ENCODE measurements at regions of chr11 and their contacts with region 1.

Region 1: DNA sequence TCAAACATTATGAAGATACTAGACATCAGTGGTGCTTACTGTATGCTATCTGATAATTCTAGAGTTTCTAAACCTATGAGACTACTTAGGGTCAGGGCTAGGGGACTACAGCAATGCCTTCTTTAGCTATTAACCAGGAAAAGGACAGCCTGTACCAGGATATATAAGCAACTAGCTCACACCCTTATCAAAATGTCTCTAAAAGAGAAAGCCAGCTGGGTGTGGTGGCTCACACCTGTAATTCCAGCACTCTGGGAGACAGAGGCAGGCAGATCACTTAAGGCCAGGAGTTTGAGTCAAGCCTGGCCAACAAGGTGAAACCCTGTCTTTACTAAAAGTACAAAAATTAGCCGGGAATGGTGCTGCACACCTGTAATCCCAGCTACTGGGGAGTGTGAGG is 55.8 kb downstream of the RAB6A start:
- DNase-seq: no peak
- ATAC-seq: no peak
- H3K4me3 ChIP-seq: no peak overlapping the region
- H3K27ac ChIP-seq: no peak overlapping the region
- H3K4me1 ChIP-seq: no peaks in the 10 kb centered on the region
- H3K27me3 ChIP-seq: no peaks in the 10 kb centered on the region
- CTCF ChIP-seq: no peak
- EP300 ChIP-seq: no peak
- POLR2A ChIP-seq: no peak
- RAD21 ChIP-seq: no peak

Region 2: GRCh38 chr11:73633999-73634398 is 71.1 kb before region 1 on chr11:
- CTCF ChIA-PET with region 1: no interaction called
- POLR2A ChIA-PET with region 1: no interaction called
- in situ Hi-C with region 1: no loop called
- intact Hi-C with region 1: no loop called
- DNase-seq: no peak
- ATAC-seq: no peak
- H3K4me3 ChIP-seq: no peak overlapping the region
- H3K27ac ChIP-seq: no peak overlapping the region
- H3K4me1 ChIP-seq: peaks cover 12% of the 10 kb centered on the region
- H3K27me3 ChIP-seq: no peaks in the 10 kb centered on the region
- CTCF ChIP-seq: no peak
- EP300 ChIP-seq: no peak
- POLR2A ChIP-seq: no peak
- RAD21 ChIP-seq: no peak

Region 3: DNA sequence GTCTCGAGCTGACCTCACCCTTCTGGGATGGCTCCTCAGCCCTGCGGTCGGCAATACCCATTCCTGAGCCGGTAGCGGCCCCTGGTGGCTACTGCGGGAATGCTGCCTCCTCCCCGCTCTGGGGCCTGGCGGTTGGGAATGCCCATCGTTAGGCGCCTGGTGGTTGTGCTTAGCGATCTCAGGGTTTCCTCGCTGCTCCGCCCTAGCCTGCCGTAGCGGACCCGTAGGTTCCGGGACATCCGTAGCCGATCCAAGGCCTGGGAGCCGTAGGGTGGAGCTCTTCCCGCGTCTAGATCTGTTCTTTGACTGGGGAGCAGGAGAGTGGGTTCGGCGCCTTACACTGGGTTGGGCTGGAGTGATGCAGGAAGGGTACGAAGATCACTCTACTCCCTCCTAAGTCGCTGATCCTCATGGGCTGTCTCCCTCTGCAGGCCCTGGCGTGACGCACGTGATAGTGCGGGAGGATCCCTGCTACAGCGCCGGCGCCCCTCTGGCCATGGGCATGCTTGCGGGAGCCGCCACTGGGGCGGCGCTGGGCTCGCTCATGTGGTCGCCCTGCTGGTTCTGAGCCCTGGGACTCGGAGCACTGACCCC is 43.9 kb before region 1 on chr11:
- CTCF ChIA-PET with region 1: no interaction called
- POLR2A ChIA-PET with region 1: no interaction called
- in situ Hi-C with region 1: no loop called
- intact Hi-C with region 1: no loop called
- DNase-seq: no peak
- ATAC-seq: peak; percentile 81
- H3K4me3 ChIP-seq: no peak overlapping the region
- H3K27ac ChIP-seq: no peak overlapping the region
- H3K4me1 ChIP-seq: no peaks in the 10 kb centered on the region; the same call in 1 of the 2 replicates
- H3K27me3 ChIP-seq: no peaks in the 10 kb centered on the region
- CTCF ChIP-seq: peak; percentile 97
- EP300 ChIP-seq: no peak
- POLR2A ChIP-seq: no peak
- RAD21 ChIP-seq: peak; percentile 98

Region 4: GRCh38 chr11:74154621-74155281 is 449.7 kb after region 1 on chr11:
- CTCF ChIA-PET with region 1: no interaction called
- POLR2A ChIA-PET with region 1: no interaction called
- in situ Hi-C with region 1: no loop called
- intact Hi-C with region 1: no loop called
- DNase-seq: no peak
- ATAC-seq: no peak
- H3K4me3 ChIP-seq: no peak overlapping the region
- H3K27ac ChIP-seq: no peak overlapping the region
- H3K4me1 ChIP-seq: no peaks in the 10 kb centered on the region
- H3K27me3 ChIP-seq: no peaks in the 10 kb centered on the region
- CTCF ChIP-seq: no peak
- EP300 ChIP-seq: no peak
- POLR2A ChIP-seq: no peak
- RAD21 ChIP-seq: no peak

Region 5: DNA sequence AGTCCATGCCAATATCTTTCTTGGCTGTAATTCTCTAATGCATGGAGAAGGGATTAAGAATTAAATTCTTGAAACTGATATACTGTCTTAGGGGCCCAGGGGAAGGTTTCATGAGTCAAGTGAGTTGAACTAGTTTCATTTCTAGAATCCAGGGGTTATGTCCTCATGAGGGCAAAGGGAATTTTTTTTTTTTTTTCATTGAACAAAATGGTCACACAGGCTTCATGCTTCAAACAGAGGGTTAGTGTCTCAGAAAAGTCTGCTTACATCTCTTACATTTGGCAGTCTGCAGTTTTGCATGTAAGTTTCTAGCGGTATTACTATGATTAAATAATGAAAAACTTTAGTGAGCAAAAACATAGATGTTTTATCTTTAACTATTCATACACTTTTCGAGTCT is 498.9 kb after region 1 on chr11:
- CTCF ChIA-PET with region 1: no interaction called
- POLR2A ChIA-PET with region 1: no interaction called
- in situ Hi-C with region 1: no loop called
- intact Hi-C with region 1: loop called (anchors 5 kb)
- DNase-seq: no peak
- ATAC-seq: no peak
- H3K4me3 ChIP-seq: no peak overlapping the region
- H3K27ac ChIP-seq: no peak overlapping the region
- H3K4me1 ChIP-seq: no peaks in the 10 kb centered on the region
- H3K27me3 ChIP-seq: no peaks in the 10 kb centered on the region
- CTCF ChIP-seq: no peak
- EP300 ChIP-seq: no peak
- POLR2A ChIP-seq: no peak
- RAD21 ChIP-seq: no peak